Heart left ventricle (tissue), 16 donors: ENCODE measurements at regions of chr14 and their contacts with region 1.

Region 1: DNA sequence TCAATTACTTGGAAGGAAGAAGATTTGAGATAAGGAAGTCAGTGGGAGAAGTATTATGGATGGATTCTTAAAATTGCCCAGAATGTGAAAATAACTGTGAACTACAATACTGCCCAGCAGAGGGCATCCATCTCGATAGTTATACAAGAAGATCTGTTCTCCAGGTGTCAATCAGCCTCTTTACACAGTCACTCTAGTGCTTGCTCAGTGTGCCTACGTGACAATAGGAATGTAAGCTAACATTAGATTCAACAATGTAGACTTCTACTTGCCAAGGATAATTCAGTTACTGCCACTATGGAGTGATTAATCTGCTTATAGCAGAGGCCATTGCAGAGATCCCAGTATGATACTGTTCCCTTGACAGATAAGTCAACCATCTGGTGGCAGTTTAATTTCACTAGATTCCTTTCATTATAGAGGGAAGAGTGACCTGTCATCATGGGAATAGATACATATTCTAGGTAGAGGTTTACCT is 10.6 kb upstream of the MAP4K5 start:
- DNase-seq: no peak
- ATAC-seq: peak in 2 of 4 donors; percentile 18 to 60
- H3K4me3 ChIP-seq: no peak overlapping the region
- H3K27ac ChIP-seq: no peak overlapping the region
- H3K4me1 ChIP-seq: peaks cover 0 to 6% (median 0%) of the 10 kb centered on the region in 12 donors
- H3K27me3 ChIP-seq: no peaks in the 10 kb centered on the region
- CTCF ChIP-seq: peak; percentile 32 to 63 (median 50)
- POLR2A ChIP-seq: no peak

Region 2: GRCh38 chr14:50631408-50631821 is 88.4 kb after region 1 on chr14:
- intact Hi-C with region 1: no loop called
- DNase-seq: no peak
- ATAC-seq: no peak
- H3K4me3 ChIP-seq: no peak overlapping the region
- H3K27ac ChIP-seq: no peak overlapping the region
- H3K4me1 ChIP-seq: peaks cover 0 to 10% (median 0%) of the 10 kb centered on the region in 12 donors
- H3K27me3 ChIP-seq: no peaks in the 10 kb centered on the region
- CTCF ChIP-seq: no peak
- POLR2A ChIP-seq: no peak

Region 3: DNA sequence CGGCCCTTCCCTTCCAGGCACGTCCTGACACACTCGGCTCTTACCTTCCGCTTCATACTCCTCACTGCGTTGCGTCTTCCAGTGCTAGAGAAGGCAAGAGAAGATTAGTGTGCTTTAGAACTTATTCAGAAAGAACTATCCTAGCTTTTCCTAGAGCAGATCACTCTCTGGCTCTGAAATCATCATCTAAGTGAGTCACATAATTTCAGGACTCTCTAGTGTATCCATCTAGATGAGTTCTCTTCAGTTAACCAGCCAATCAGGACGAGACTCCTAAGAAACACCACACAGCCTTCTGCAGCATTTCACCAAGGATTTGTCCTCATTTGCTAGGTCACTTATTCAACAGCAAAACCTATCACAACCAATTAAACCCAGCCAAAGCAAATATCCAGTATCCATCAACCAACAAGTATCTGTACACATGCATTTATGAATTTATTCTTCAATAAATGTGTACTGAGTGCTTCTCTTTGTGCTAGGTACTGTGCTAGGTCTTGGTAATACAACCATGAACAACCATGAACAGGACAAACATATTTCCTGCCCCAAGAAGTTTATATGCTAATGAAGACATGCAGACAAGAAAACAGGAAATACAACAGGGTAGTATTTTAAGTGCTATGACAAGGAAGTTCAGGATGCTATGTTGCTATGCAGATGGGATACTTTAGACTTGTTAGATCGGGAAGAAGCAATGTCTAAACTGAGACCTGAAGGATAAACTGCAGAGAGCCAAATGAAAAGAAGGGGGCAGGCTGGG is 235.9 kb after region 1 on chr14:
- intact Hi-C with region 1: loop called in 4 of 10 experiments (anchors 2 to 5 kb)
- DNase-seq: no peak
- ATAC-seq: no peak
- H3K4me3 ChIP-seq: no peak overlapping the region
- H3K27ac ChIP-seq: peak overlapping the region in 1 of 12 donors; percentile 12
- H3K4me1 ChIP-seq: peaks cover 0 to 47% (median 19%) of the 10 kb centered on the region in 12 donors
- H3K27me3 ChIP-seq: no peaks in the 10 kb centered on the region
- CTCF ChIP-seq: no peak
- POLR2A ChIP-seq: no peak